Activated CD8-positive, alpha-beta T cell treated with anti-CD3 and anti-CD28 coated beads for 36 hours (primary cell): ENCODE measurements at regions of chr9 and their contacts with region 1.

Region 1: DNA sequence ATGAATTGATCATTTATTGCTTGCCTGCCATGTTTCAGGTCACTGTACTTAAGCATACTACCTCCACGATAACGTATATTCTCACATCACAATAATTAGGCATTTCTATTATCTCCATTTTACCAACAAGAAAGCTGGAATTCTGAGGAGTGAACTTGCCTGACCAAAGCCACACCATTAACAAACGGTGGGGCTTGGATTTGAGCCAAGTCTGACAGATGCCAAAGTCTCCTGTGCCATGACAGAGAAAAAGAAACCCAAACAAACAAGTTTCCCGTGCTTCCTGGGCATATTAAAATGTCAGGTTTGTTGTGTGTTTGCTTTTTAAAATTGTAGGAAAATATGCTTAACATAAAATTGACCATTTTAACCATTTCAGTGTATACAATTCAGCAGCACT is 40.8 kb upstream of the KCNV2 start:
- DNase-seq: no peak
- ATAC-seq: no peak
- H3K4me3 Mint-ChIP-seq: no peak overlapping the region
- H3K27ac Mint-ChIP-seq: no peak overlapping the region
- H3K4me1 Mint-ChIP-seq: no peaks in the 10 kb centered on the region
- H3K27me3 Mint-ChIP-seq: no peaks in the 10 kb centered on the region
- CTCF ChIP-seq: no peak

Region 2: DNA sequence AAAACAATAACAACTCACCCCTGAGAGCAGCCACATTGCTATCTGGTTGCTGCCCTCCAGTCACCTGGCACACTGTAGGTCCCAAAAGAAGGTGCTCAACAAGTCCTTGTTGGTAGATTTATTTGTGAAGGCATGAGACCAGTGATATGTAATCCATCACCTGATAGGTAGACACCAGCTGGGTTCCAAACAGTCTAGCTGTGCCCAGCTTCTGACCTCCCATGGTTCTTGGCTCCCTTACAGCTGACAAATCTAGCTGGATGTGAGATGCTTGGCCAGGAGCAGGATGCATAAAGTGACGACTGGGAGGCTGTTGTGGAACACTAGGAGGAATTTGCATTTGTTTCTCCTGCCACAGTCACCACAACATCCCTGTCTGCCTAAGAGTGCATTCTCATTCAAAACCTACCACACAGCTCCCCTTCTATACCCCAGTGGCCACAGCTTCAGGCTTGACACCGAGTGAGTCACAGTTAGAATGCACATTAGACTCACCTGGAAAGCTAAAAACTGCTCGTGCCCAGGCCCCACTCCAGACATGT is 62.7 kb before region 1 on chr9:
- CTCF ChIA-PET with region 1: no interaction called
- POLR2A ChIA-PET with region 1: no interaction called
- intact Hi-C with region 1: loop called (anchors 10 kb)
- DNase-seq: no peak
- ATAC-seq: no peak
- H3K4me3 Mint-ChIP-seq: no peak overlapping the region
- H3K27ac Mint-ChIP-seq: no peak overlapping the region
- H3K4me1 Mint-ChIP-seq: no peaks in the 10 kb centered on the region
- H3K27me3 Mint-ChIP-seq: peaks cover 18% of the 10 kb centered on the region
- CTCF ChIP-seq: no peak

Region 3: GRCh38 chr9:2691626-2692025 is 15.2 kb after region 1 on chr9:
- CTCF ChIA-PET with region 1: no interaction called
- POLR2A ChIA-PET with region 1: no interaction called
- intact Hi-C with region 1: no loop called
- DNase-seq: no peak
- ATAC-seq: no peak
- H3K4me3 Mint-ChIP-seq: no peak overlapping the region
- H3K27ac Mint-ChIP-seq: no peak overlapping the region
- H3K4me1 Mint-ChIP-seq: no peaks in the 10 kb centered on the region
- H3K27me3 Mint-ChIP-seq: no peaks in the 10 kb centered on the region
- CTCF ChIP-seq: no peak